Dorsolateral prefrontal cortex (tissue), 120 donors: ENCODE measurements at regions of chr10 and their contacts with region 1.

Region 1: DNA sequence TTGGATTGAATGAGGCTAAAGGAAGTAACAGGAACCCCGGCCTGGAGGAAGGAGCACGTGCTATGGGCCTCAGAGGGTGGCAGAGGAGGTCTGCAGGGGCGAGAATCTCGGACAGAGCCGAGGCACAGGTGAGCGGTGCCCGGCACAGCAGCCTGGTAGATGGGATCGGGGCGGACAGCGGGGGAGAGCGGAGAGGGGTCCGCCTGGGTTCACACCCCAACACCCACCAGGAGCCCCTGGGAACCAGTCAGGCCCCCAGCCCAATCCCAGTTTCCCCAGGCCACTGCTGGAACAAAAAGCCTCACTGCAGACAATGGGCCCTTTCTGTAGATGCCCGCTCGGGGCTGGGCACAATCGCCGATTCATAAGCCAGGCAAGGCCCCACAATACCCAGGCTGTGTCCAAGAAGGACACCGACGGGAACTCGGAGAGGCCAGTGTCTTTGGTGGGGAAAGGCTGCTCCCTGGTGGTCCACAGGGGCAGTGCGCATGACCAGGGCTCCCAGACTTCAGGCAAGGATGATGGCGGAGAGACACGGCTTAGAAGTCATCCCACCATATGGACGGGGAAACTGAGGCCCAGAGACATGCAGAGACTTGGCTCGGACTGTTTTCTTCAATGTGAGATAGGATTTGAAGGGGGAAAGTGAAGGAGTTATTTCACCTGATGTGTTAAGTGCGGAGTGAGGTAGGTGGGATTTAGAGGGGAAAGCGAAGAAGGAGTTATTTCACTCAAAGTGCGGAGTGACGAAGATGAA is 106.9 kb upstream of the GPR26 start:
- DNase-seq: peak; percentile 59 to 96 (median 92)
- H3K4me3 ChIP-seq: peak overlapping the region in 10 of 59 donors; percentile 1 to 40 (median 21)
- H3K27ac ChIP-seq: peak overlapping the region in 58 of 59 donors; percentile 41 to 98 (median 92)
- H3K27me3 ChIP-seq: no peaks in the 10 kb centered on the region
- CTCF ChIP-seq: peak; percentile 72 to 100 (median 99)

Region 2: DNA sequence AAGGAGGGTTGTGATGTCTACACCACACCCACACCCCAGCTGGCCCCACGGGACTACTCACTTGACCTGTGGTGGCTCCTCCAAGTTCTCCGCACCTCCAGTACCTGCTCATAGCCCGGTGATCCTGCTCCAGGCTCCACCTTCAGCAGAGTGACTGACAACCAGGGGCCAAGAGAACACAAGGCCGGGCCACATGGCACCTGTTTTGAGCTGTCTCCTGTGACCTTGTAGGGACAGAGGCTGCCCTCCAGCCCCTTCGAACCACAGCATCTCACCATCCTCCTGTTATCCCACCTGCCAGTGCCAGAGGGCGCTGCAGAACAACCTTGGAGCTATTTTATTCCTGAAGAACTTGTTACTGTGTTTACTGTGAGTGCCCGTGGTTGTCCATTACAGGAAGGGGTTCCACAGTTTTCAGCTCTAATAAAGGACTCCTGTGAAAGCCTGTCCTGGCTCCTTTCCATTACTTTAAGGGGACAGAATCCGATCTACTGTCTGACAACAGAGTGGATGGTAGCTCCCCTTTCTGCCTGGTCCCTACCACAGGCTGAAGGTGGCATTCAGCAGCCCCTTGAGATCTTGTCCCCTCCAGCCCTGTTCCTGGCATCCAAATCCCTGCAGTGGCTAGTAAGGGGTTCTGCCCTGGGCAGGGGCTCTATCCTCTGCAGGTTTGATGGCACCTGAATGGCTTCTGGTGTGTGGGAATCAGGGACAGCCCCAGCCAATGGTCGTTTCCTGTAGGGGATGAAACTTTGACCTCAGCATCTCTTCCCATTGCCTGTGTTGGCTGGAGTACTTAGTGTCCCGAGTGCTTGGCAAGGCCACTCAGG is 910.4 kb before region 1 on chr10:
- intact Hi-C with region 1: loop called in 1 of 2 experiments (anchors 10 kb)
- DNase-seq: peak; percentile 13 to 79 (median 66)
- H3K4me3 ChIP-seq: no peak overlapping the region
- H3K27ac ChIP-seq: no peak overlapping the region
- H3K27me3 ChIP-seq: peaks cover 0 to 15% (median 0%) of the 10 kb centered on the region in 45 donors
- CTCF ChIP-seq: peak; percentile 45 to 94 (median 86)

Region 3: DNA sequence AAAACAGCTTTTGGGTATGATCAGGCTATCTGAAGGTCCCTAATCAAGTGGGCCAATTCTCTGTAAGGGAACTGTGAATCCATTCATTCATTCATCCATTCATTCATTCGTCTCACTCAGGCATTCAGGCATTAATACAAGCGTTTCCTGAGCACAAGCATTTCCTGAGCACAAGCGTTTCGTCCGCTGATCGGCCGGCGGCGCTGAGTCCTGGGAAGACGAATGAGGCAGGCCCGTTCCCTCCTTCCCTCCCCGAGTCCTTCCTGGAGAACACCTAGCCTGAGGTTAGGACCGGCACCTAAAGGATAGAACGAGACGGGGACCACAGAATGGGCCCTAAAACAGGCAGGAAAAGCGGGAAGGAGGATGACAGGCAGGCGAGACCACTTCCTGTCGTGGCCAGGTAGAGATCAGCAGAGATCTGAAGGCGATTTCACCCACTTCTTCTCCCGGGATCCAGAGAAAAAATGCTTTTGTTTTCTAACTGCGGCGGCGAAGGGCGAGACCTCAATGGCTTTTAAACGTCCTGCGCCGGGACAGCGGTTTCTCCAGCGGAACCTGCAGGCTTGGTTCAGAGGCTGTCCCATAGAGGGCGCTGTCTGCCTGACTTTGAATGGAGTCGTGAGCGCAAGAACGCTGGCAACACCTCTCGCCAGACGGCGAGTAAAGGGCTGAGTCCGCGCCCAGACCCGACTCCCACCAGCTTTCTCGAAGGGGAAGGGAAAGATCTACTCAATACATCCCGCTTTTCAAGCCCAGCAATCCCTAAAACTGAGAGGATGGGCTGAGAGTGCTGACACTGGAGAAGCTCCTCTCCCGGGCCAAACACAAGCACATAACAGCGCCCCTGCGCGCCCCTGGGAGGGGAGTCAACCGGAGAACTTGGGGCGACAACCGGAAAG is 426.4 kb before region 1 on chr10:
- intact Hi-C with region 1: loop called (anchors 2 to 5 kb)
- DNase-seq: peak; percentile 68 to 86 (median 81)
- H3K4me3 ChIP-seq: peak overlapping the region in 43 of 59 donors; percentile 2 to 63 (median 31)
- H3K27ac ChIP-seq: no peak overlapping the region
- H3K27me3 ChIP-seq: peaks cover 31 to 98% (median 71%) of the 10 kb centered on the region in 45 donors
- CTCF ChIP-seq: peak; percentile 40 to 98 (median 90)

Region 4: DNA sequence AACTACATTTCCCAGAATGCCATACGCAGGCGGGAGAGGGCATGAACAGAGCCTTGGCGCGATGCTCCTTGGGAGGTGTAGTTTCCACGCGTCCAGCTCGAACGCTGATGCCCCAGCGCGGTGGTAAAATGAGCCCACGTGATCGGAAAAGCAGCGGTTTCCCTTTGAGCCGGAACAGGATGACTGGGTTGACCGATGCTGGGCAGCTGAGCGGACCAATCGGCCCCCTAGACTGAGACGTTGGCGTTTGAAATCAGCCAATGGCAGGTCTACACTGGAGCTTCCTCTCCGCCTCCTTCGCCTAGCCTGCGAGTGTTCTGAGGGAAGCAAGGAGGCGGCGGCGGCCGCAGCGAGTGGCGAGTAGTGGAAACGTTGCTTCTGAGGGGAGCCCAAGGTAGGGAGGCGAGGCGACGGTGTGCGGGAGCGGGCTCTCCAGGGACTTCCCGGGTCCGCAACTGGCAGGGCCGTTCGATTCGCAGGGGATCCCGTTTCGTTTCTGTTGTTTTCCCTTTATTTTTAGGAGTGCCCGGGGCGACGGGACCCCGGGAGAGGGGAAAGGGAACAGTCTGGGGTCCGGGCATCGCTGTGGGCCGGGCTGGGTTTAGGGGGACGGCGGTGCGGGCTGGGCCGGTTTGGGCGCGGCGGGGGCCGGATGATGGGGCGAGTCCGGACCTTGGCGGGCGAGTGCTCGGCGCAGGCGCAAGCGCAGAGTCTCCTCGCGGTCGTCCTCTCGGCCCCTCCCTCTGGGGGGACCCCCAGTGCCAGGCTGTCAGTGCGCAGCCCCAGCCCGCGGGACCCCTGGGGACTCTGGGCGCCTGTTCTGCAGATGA is 404.9 kb before region 1 on chr10 and contains the start of gene BUB3:
- intact Hi-C with region 1: loop called (anchors 5 kb)
- DNase-seq: peak; percentile 98 to 100 (median 100)
- H3K4me3 ChIP-seq: peak within 1 kb of the TSS; percentile 68 to 100 (median 93)
- H3K27ac ChIP-seq: peak within 1 kb of the TSS in 54 of 59 donors; percentile 25 to 93 (median 82)
- H3K27me3 ChIP-seq: peaks cover 17 to 42% (median 37%) of the 10 kb centered on the region in 45 donors
- CTCF ChIP-seq: peak in 40 of 56 donors; percentile 10 to 59 (median 42)
- total RNA-seq, gene BUB3: 42.8 to 88.8 (median 64.1) TPM

Region 5: DNA sequence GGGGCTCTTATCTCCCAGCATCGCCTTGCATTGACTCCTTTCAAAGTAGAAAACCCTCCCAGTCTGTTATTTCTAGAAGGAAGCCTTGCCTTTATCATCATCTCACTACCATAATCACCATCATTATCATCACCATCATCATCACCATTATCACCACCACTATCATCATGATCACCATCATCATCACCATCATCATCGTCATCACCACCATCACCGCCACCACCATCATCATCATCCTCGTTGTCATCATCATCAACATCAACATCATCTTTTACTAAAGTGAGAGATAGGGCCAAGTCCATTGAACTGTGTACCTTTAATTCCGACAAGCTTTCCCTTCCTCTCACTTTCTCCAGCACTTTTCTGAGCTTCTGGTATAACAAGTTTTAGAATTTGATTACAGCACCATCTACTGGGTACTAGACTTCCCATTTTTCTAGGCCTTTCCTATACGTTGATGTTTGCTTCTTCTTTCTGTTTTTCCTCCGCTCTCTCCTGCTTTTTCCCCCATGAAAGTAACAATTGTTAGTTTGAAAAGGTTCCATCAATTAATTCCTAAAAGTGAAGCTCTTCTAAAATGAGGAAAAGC is 178.7 kb before region 1 on chr10:
- intact Hi-C with region 1: loop called (anchors 2 to 10 kb)
- DNase-seq: no peak
- H3K4me3 ChIP-seq: no peak overlapping the region
- H3K27ac ChIP-seq: peak overlapping the region in 9 of 59 donors; percentile 5 to 49 (median 24)
- H3K27me3 ChIP-seq: peaks cover 0 to 3% (median 0%) of the 10 kb centered on the region in 45 donors
- CTCF ChIP-seq: peak; percentile 11 to 84 (median 63)